ENCODE measurements at regions of chr2 and their contacts with region 1.

Region 1: DNA sequence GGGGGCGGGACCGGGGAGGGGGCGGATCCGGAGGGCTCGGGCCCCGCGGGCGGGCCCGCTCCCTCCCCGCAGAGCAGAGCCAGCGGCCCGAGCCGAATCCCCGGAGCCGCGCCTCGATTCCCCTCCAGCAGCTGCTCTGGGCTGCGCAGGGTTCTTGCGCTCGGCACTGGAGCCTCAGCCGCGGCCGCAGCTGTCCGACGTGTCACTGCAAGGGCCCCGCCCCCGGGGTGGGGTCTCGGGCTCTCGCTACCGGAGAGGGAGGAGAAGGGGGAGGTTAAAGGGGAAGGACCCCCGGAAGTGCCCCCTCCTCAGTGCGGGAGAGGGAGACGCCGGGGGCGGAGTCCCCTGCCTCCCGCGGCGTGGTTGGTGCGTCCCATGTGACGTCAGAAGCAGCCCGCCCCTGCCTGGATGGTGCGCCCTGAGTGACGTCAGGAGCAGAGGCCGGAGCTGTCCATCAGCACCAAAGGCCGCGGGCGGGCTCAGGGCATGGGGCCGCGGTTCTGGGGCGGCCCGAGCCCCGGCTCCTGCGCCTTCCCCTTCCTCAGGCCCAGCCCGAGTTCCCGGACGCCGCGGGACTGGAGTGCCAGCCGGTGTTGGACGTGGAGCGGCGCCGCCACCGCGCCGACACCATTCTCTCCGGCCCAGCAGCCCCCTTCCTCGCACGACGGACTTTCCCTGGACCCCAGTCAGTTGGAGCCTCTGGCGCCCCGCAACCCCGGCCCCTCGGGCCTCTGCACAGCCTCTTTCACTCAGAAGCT is at the starts of genes CHPF and TMEM198:
- DNase-seq: peak; percentile 98
- H3K4me3 ChIP-seq: peak within 1 kb of the TSS; percentile 74 to 88 (median 83)
- H3K27ac ChIP-seq: peak within 1 kb of the TSS; percentile 78
- H3K4me1 ChIP-seq: peaks cover 28% of the 10 kb centered on the region
- H3K27me3 ChIP-seq: no peaks in the 10 kb centered on the region
- CTCF ChIP-seq: no peak
- total RNA-seq, gene CHPF: 114 to 274 TPM
- total RNA-seq, gene TMEM198: 1.3 to 5.2 TPM

Region 2: DNA sequence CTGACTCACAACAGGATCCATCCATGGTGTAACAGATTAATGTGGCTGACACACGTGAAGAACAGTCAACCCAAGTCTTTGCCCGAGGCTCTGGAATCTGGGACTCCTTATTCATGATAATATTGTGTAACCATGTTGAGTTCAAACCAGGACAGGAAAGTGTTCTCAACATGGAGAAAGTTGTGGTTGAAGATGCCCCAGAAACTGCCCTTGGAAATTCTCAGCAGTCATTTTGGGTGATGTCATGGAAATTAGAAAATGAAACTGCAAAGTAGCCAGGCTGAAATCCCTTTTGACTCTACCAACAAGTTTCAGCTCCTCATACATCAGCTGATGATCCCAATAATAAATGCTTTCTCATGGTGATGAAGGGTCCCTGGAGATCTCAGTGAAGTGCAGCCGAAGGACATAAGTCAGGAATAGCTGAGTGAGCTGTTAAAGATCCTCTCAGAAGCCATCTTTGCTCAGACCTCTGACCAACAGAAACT is 1848.7 kb before region 1 on chr2:
- CTCF ChIA-PET with region 1: no interaction called
- dilution Hi-C with region 1: no loop called
- in situ Hi-C with region 1: no loop called
- intact Hi-C with region 1: no loop called
- DNase-seq: peak; percentile 98
- H3K4me3 ChIP-seq: no peak overlapping the region
- H3K27ac ChIP-seq: peak overlapping the region; percentile 51
- H3K4me1 ChIP-seq: peaks cover 21% of the 10 kb centered on the region
- H3K27me3 ChIP-seq: no peaks in the 10 kb centered on the region
- CTCF ChIP-seq: no peak

Region 3: DNA sequence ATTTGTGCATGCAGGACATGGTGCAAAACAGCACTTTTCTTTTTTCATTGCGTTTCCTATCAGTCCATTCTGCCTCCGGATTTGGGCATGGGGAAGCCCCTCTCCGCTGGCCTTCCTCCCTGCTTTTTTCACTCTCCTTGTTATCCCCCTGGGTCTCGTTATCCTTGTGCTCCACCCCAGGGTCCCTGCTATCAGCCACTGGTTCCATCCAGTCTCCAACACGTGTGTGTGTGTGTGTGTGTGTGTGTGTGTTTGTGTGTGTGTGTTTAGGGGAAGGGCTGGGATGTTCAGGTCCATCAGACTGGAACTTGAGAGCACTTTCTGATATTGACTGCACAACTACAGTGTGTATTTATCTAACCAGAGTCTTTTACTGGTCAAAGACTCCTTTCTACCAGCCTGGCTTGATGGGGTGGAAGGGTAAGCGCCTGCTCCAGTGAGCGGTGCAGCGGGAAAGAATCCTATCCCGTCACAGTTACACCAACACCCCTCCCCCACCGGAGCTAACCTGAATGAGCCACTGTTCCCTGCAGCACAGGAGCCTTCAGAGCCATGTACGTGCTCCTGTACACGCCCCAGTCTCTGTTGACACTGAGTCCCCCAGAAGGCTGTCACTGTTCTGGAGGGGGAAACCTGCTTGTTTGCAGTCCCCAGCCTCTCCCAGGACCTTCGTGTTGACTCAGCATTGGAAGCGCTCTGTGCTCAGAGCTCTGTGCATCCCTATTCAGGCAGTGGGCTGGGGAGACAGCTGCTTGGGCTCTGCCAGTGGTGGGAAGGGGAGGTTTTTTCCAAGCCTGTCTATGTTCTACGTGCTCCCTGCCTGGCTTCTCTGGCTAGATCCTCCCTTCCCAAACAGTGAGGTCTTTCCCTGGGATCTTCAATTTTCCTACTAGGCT is 33.0 kb after region 1 on chr2:
- CTCF ChIA-PET with region 1: no interaction called
- dilution Hi-C with region 1: loop called (anchors 5 kb)
- in situ Hi-C with region 1: no loop called
- intact Hi-C with region 1: no loop called
- DNase-seq: peak; percentile 41
- H3K4me3 ChIP-seq: no peak overlapping the region
- H3K27ac ChIP-seq: no peak overlapping the region
- H3K4me1 ChIP-seq: peaks cover 8% of the 10 kb centered on the region
- H3K27me3 ChIP-seq: no peaks in the 10 kb centered on the region
- CTCF ChIP-seq: no peak

Region 4: DNA sequence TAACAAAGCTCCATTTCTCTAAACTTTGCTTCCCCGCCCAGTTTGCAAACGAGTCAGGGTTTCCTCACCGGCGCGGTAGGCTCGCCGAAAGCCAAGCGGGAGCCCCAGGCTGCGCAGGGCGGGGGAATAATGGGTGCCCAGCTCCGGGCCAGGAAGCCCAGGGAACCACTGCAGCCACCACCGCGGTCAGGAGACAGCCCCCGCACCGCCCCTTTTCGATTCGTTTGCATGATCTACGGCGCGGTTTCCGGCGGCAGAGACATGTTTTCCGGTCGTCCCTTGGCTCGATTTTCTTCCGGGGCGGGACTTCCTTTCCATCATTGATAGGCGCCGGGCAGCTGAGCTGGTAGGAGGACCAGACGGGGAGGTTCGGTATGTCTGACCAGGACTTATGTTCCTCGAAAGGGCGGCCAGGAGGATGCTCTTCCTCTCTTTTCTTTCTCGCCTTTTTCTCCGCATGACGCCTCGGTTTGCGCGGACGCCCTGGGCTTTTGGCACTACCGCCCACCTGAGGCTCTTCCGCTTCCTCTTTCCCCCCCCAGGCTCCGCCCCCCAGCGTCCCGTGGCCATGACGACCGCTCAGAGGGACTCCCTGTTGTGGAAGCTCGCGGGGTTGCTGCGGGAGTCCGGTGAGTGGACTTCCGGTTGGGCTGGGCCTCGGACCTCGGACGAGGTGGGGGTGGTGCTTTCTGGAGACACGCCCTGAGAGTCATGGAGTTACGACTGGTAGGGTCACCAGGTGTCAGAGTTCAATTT is 54.0 kb after region 1 on chr2 and contains the start of gene STK11IP:
- CTCF ChIA-PET with region 1: no interaction called
- dilution Hi-C with region 1: no loop called
- in situ Hi-C with region 1: no loop called
- intact Hi-C with region 1: loop called (anchors 1 kb)
- DNase-seq: peak; percentile 97
- H3K4me3 ChIP-seq: peak within 1 kb of the TSS; percentile 59 to 74 (median 64)
- H3K27ac ChIP-seq: peak within 1 kb of the TSS; percentile 91
- H3K4me1 ChIP-seq: peaks cover 16% of the 10 kb centered on the region
- H3K27me3 ChIP-seq: no peaks in the 10 kb centered on the region
- CTCF ChIP-seq: no peak
- total RNA-seq, gene STK11IP: 14.5 to 27.6 TPM

Region 5: DNA sequence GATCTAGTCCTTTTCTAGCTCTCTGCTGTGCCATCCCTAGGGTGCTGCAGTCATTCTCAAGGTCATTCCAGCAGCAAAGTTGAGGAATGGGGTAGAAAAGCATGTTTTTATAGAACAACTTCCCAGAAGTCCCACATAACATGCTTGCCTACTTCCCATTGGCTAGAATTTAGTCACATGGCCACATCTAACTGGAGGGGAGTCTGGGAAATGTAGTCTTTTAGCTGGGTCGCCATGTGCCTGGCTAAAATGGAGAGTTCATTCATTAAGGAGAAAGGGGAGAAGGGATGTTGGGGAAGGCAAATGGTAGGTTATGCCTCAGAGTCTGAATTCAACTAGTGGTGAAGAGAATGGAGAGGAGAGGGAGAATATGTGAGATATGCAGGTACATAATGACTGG is 169.3 kb after region 1 on chr2:
- CTCF ChIA-PET with region 1: no interaction called
- dilution Hi-C with region 1: no loop called
- in situ Hi-C with region 1: no loop called
- intact Hi-C with region 1: no loop called
- DNase-seq: peak; percentile 33
- H3K4me3 ChIP-seq: no peak overlapping the region
- H3K27ac ChIP-seq: no peak overlapping the region
- H3K4me1 ChIP-seq: no peaks in the 10 kb centered on the region
- H3K27me3 ChIP-seq: no peaks in the 10 kb centered on the region
- CTCF ChIP-seq: no peak